ENCODE measurements at regions of chr20 and their contacts with region 1.

Region 1: DNA sequence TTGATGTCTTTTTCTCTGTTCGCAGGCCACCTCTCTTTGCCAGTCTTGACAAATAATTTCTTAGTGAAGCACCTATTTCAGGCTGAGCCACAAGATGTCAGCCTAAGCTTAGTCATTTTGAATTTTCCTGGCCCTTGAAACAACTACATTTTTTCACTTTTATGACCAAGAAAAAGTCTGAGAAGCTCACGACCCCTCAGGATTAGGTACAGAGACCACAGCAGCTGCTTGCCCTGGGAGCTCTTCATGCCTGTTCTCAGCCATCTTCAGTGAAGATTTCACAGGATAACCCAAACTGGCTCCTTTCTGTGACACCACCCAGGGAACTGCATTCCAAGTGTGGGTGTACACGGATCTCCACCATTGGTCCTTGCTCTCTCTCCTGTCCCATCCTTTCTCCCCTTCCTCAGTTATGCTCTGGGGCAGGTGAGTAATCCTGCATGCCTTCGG is 38.4 kb upstream of the SPTLC3 start:
- DNase-seq: no peak

Region 2: DNA sequence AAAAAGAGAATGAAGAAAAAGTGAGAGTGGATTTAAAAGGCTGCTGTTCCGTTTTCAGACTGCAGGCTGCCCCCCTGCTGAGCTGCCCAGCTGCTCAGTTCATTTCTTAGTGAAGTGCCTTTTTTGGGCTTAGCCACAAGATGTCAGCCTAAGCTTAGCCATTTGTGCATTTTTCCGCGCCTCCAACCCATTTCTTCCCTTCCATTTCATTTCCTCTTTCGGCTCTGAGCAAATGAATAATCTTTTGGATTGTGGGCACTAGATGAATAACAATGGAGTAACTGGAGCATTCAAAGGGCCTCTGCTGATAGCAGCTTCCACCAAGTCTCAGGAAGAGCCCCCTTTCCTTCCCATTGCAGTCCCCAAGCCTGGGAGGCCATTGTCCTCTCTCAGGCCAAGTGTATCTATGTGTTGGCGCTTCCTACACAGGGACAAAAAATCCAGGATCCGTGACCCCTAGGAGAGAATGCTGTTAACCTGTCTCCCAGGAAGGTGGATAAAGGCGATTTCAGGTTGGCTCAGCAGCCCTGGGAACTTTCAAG is 45.1 kb before region 1 on chr20:
- intact Hi-C with region 1: loop called (anchors 1 kb)
- DNase-seq: peak in 9 of 10 donors; percentile 40 to 93 (median 55)

Region 3: GRCh38 chr20:13105864-13106457 is 135.6 kb after region 1 on chr20:
- intact Hi-C with region 1: loop called (anchors 1 kb)
- DNase-seq: no peak

Measured in posterior cingulate gyrus (tissue), 11 donors.